Naive thymus-derived CD8-positive, alpha-beta T cell (primary cell): ENCODE measurements at regions of chr16 and their contacts with region 1.

Region 1: DNA sequence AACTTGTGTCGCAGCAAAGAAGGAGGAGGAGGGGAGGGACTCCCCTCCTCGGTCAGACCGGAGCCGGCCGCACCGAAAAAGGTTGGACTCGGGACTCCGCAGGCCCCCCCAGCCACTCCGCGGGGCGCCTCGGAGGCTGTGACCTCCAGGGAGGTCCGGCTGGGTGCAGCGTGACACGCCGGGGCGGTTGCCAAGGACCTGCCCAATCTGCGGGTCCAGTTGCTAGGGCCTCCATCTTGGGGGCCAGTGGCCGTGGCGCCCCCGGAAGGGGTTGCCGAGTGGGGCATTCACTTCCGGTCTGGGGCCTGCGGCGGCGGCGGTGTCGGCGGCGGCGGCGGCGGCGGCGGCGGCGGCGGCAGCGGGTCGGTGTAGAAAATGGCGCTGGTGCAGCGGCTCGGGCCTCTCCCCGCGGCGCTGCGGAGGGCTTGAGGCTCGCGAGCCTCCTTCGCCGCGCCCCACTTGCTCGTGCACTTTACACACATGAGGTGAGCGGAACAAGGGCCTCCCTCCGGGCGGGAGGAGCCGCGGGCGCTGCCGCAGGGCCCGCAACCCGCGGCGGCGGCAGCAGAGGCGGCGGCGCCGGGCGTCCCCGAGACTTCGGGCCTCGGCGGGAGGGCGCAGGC is at the start of gene TNRC6A:
- DNase-seq: peak; percentile 62 to 90 (median 76)
- ATAC-seq: peak; percentile 85 to 87
- H3K4me3 Mint-ChIP-seq: peak within 1 kb of the TSS; percentile 92 to 100 (median 97)
- H3K27ac Mint-ChIP-seq: peak within 1 kb of the TSS; percentile 95 to 99 (median 98)
- H3K4me1 Mint-ChIP-seq: peaks cover 26 to 52% (median 47%) of the 10 kb centered on the region in 4 donors
- H3K27me3 Mint-ChIP-seq: no peaks in the 10 kb centered on the region
- polyA plus RNA-seq, gene TNRC6A: 9.4 to 12.9 (median 10.9) TPM

Region 2: GRCh38 chr16:24539850-24540601 is 189.4 kb before region 1 on chr16:
- POLR2A ChIA-PET with region 1: interaction called, 10 read pairs
- DNase-seq: peak in 4 of 10 donors; percentile 49 to 75 (median 53)
- ATAC-seq: no peak
- H3K4me3 Mint-ChIP-seq: peak overlapping the region; percentile 94 to 100 (median 99)
- H3K27ac Mint-ChIP-seq: peak overlapping the region; percentile 88 to 100 (median 96)
- H3K4me1 Mint-ChIP-seq: peaks cover 26 to 60% (median 48%) of the 10 kb centered on the region in 4 donors
- H3K27me3 Mint-ChIP-seq: no peaks in the 10 kb centered on the region